CD4-positive, alpha-beta T cell (primary cell): ENCODE measurements at regions of chr15 and their contacts with region 1.

Region 1: DNA sequence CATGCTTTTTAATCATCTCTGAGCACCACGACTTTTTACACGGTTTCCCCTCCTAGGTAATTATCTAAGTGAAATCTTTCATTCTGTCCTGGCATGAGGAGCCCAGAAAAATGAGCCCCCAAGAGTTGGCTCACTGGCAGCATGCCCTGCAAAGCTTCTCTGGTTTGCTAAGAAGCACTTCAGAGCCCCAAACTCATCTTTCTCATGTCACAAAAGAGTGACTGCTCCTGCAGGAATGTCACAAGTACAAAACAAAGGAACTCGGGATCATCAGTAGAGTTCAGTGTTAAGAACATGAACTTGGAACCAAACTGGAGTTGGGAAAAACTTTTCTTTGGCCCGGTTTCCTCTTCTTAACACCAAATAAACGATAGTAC is 123.9 kb downstream of the FOXB1 start:
- DNase-seq: peak in 1 of 14 experiments; percentile 6
- ATAC-seq: no peak
- H3K4me3 ChIP-seq: peak overlapping the region; percentile 55
- H3K4me3 Mint-ChIP-seq: peak overlapping the region; percentile 78
- H3K27ac ChIP-seq: peak overlapping the region; percentile 64 to 68
- H3K27ac Mint-ChIP-seq: peak overlapping the region; percentile 88
- H3K4me1 ChIP-seq: peaks cover 14% of the 10 kb centered on the region
- H3K4me1 Mint-ChIP-seq: peaks cover 52% of the 10 kb centered on the region
- H3K27me3 ChIP-seq: no peaks in the 10 kb centered on the region
- H3K27me3 Mint-ChIP-seq: no peaks in the 10 kb centered on the region
- CTCF ChIP-seq: no peak

Region 2: GRCh38 chr15:59797756-59798604 is 330.0 kb before region 1 on chr15:
- CTCF ChIA-PET with region 1: interaction called, 3 read pairs
- POLR2A ChIA-PET with region 1: no interaction called
- intact Hi-C with region 1: loop called in 1 of 2 experiments (anchors 5 kb)
- DNase-seq: peak in 1 of 14 experiments; percentile 39
- ATAC-seq: no peak
- H3K4me3 ChIP-seq: peak overlapping the region; percentile 20
- H3K4me3 Mint-ChIP-seq: peak overlapping the region; percentile 69
- H3K27ac ChIP-seq: peak overlapping the region in 1 of 2 donors; percentile 55
- H3K27ac Mint-ChIP-seq: peak overlapping the region; percentile 81
- H3K4me1 ChIP-seq: peaks cover 54% of the 10 kb centered on the region
- H3K4me1 Mint-ChIP-seq: peaks cover 80% of the 10 kb centered on the region
- H3K27me3 ChIP-seq: no peaks in the 10 kb centered on the region
- H3K27me3 Mint-ChIP-seq: no peaks in the 10 kb centered on the region
- CTCF ChIP-seq: no peak

Region 3: DNA sequence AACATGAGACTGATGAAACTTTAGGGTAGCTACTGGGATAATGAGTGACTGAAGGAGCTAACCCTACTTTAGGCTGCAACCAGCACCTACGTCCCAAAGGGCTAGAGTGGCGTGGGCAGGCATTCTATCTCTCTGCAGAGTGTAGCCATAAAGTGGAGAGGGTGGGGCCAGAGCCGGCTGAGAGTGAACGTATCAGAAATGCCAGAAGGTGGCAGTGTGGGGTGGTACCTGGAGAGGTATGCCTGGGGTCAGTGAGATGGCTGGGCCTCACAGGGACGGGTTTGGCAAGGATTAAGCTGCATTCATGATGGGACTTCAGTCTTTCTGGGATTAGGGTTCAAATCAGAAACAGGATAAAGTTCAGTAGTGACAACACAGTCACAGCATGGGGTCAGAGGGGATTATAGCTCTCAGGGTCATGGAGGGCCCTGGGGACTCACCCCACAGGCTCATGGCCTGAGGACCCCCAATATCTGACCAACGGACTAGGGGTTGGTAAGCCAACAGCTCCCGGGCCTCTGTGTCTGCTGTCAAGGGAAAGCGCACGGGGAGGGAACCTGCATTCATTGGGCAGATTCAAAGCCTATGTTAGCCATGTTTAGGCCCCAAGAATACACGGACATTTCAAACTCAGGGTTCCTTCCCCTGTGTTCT is 210.4 kb before region 1 on chr15:
- CTCF ChIA-PET with region 1: interaction called, 10 read pairs
- POLR2A ChIA-PET with region 1: no interaction called
- intact Hi-C with region 1: loop called (anchors 2 kb)
- DNase-seq: peak; percentile 47 to 79 (median 60)
- ATAC-seq: peak; percentile 80
- H3K4me3 ChIP-seq: no peak overlapping the region
- H3K4me3 Mint-ChIP-seq: no peak overlapping the region
- H3K27ac ChIP-seq: no peak overlapping the region
- H3K27ac Mint-ChIP-seq: no peak overlapping the region
- H3K4me1 ChIP-seq: peaks cover 19% of the 10 kb centered on the region
- H3K4me1 Mint-ChIP-seq: peaks cover 15% of the 10 kb centered on the region
- H3K27me3 ChIP-seq: no peaks in the 10 kb centered on the region
- H3K27me3 Mint-ChIP-seq: peaks cover 30% of the 10 kb centered on the region
- CTCF ChIP-seq: peak; percentile 68

Region 4: GRCh38 chr15:59976480-59977271 is 151.3 kb before region 1 on chr15:
- CTCF ChIA-PET with region 1: no interaction called
- POLR2A ChIA-PET with region 1: interaction called, 3 read pairs
- intact Hi-C with region 1: loop called in 1 of 2 experiments (anchors 10 kb)
- DNase-seq: peak in 13 of 14 experiments; percentile 26 to 88 (median 43)
- ATAC-seq: peak; percentile 95
- H3K4me3 ChIP-seq: no peak overlapping the region
- H3K4me3 Mint-ChIP-seq: peak overlapping the region; percentile 47
- H3K27ac ChIP-seq: no peak overlapping the region
- H3K27ac Mint-ChIP-seq: peak overlapping the region; percentile 7
- H3K4me1 ChIP-seq: peaks cover 15% of the 10 kb centered on the region
- H3K4me1 Mint-ChIP-seq: peaks cover 43% of the 10 kb centered on the region
- H3K27me3 ChIP-seq: no peaks in the 10 kb centered on the region
- H3K27me3 Mint-ChIP-seq: no peaks in the 10 kb centered on the region
- CTCF ChIP-seq: no peak

Region 5: GRCh38 chr15:60006203-60006862 is 121.7 kb before region 1 on chr15:
- CTCF ChIA-PET with region 1: no interaction called
- POLR2A ChIA-PET with region 1: interaction called, 6 read pairs
- intact Hi-C with region 1: loop called in 1 of 2 experiments (anchors 5 kb)
- DNase-seq: peak in 13 of 14 experiments; percentile 31 to 89 (median 58)
- ATAC-seq: peak; percentile 81
- H3K4me3 ChIP-seq: peak overlapping the region; percentile 55
- H3K4me3 Mint-ChIP-seq: peak overlapping the region; percentile 91
- H3K27ac ChIP-seq: no peak overlapping the region
- H3K27ac Mint-ChIP-seq: peak overlapping the region; percentile 81
- H3K4me1 ChIP-seq: peaks cover 38% of the 10 kb centered on the region
- H3K4me1 Mint-ChIP-seq: peaks cover 45% of the 10 kb centered on the region
- H3K27me3 ChIP-seq: peaks cover 67 to 100% of the 10 kb centered on the region in 2 experiments
- H3K27me3 Mint-ChIP-seq: peaks cover 98% of the 10 kb centered on the region
- CTCF ChIP-seq: no peak

Region 6: GRCh38 chr15:60091165-60091564 is 36.8 kb before region 1 on chr15:
- CTCF ChIA-PET with region 1: no interaction called
- POLR2A ChIA-PET with region 1: no interaction called
- intact Hi-C with region 1: no loop called
- DNase-seq: no peak
- ATAC-seq: no peak
- H3K4me3 ChIP-seq: no peak overlapping the region
- H3K4me3 Mint-ChIP-seq: no peak overlapping the region
- H3K27ac ChIP-seq: no peak overlapping the region
- H3K27ac Mint-ChIP-seq: no peak overlapping the region
- H3K4me1 ChIP-seq: no peaks in the 10 kb centered on the region
- H3K4me1 Mint-ChIP-seq: no peaks in the 10 kb centered on the region
- H3K27me3 ChIP-seq: no peaks in the 10 kb centered on the region
- H3K27me3 Mint-ChIP-seq: peaks cover 6% of the 10 kb centered on the region
- CTCF ChIP-seq: no peak